ENCODE measurements at regions of chr15 and their contacts with region 1.

Region 1: GRCh38 chr15:97598353-97598798 is 362.1 kb upstream of the ARRDC4 start:
- DNase-seq: no peak
- H3K4me3 ChIP-seq: no peak overlapping the region
- H3K27ac ChIP-seq: no peak overlapping the region
- H3K4me1 ChIP-seq: no peaks in the 10 kb centered on the region
- H3K27me3 ChIP-seq: no peaks in the 10 kb centered on the region
- CTCF ChIP-seq: no peak
- POLR2A ChIP-seq: no peak

Region 2: DNA sequence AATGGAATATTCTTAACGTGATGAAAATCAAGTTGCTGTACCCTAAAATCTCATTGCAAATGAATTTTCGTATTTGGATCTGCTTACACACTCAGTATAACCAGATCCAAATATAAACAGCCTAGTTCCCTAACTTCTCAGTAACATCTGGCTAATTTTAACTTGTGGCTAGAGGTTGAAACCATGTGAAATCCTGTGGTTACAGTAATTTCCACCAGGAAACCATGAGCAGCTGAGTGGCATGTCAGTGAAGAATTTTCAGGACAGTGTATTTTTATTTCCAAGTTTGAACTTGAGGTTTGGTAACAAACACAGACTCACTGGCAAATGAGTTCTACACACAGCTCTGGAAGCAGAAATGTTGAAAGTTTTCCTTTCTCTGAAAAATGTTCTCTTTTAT is 513.7 kb before region 1 on chr15:
- intact Hi-C with region 1: no loop called
- DNase-seq: no peak
- H3K4me3 ChIP-seq: no peak overlapping the region
- H3K27ac ChIP-seq: no peak overlapping the region
- H3K4me1 ChIP-seq: no peaks in the 10 kb centered on the region
- H3K27me3 ChIP-seq: no peaks in the 10 kb centered on the region
- CTCF ChIP-seq: no peak
- POLR2A ChIP-seq: no peak

Region 3: GRCh38 chr15:97259943-97260342 is 338.4 kb before region 1 on chr15:
- intact Hi-C with region 1: no loop called
- DNase-seq: no peak
- H3K4me3 ChIP-seq: no peak overlapping the region
- H3K27ac ChIP-seq: no peak overlapping the region
- H3K4me1 ChIP-seq: no peaks in the 10 kb centered on the region
- H3K27me3 ChIP-seq: no peaks in the 10 kb centered on the region
- CTCF ChIP-seq: no peak
- POLR2A ChIP-seq: no peak

Region 4: DNA sequence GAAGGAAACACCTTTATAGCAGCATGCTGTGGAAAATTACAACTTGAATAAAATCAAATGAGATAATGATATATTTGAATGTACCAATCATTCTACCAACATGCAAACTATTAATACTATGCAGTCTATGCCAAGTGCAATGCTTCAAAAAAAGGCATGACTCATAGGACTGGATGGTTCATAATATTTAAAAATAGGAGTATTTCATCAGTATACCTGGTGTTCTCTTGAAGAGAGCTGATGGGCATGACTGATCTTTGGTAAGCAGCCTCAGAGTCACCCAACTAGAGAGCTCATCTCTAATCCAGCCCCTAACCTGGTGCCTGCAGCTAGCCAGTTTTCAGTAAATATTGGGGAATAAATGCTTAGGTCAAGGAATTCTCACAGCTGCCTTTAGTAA is 72.6 kb before region 1 on chr15:
- intact Hi-C with region 1: loop called (anchors 10 kb)
- DNase-seq: no peak
- H3K4me3 ChIP-seq: no peak overlapping the region
- H3K27ac ChIP-seq: no peak overlapping the region
- H3K4me1 ChIP-seq: no peaks in the 10 kb centered on the region
- H3K27me3 ChIP-seq: no peaks in the 10 kb centered on the region
- CTCF ChIP-seq: no peak
- POLR2A ChIP-seq: no peak

Region 5: GRCh38 chr15:97708252-97708651 is 109.9 kb after region 1 on chr15:
- intact Hi-C with region 1: no loop called
- DNase-seq: no peak
- H3K4me3 ChIP-seq: no peak overlapping the region
- H3K27ac ChIP-seq: no peak overlapping the region
- H3K4me1 ChIP-seq: no peaks in the 10 kb centered on the region
- H3K27me3 ChIP-seq: no peaks in the 10 kb centered on the region
- CTCF ChIP-seq: no peak
- POLR2A ChIP-seq: no peak